GM18951 (cell line): ENCODE measurements at regions of chr12 and their contacts with region 1.

Region 1: GRCh38 chr12:100234598-100235304 is 32.1 kb downstream of the DEPDC4 start:
- POLR2A ChIP-seq: no peak

Region 2: GRCh38 chr12:100573292-100574186 is 338.8 kb after region 1 on chr12 and contains the start of gene GAS2L3:
- in situ Hi-C with region 1: loop called (anchors 25 kb)
- POLR2A ChIP-seq: peak; percentile 57

Region 3: DNA sequence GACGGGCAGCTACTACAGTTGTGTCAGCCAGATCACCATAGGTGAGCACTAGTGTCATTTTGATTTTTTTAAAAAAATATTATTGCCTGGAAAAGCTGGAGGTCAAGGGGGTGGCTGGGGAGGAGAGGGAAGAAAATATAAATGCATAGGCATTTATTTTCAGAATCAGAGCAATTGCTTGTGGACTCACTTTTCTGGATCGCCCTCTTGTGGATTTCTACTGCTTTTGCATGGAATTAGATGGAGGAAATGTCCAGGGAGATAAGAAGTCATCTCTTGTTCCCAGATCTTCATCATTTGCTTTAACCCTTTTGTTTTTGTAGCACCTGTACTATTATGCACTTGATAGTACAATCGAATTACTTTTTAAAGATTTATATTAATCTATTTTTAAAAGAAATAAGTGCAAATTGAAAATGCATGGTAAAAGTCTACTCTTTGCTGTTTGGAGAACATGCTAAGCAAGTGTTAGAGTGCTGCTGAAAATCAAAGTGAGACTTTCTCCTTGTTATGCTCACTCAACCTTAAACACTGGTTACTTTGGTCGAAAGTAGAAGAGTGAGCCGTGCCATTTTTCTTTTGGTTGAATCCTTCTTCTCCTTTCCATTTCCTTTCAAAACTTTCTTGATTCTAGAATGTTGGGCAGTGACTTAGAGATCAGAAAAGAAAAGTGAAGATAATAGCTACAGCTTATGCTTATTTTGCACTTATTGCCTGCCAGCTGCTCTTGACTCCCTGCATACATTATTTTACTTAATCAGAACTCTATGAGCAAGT is 499.3 kb after region 1 on chr12:
- in situ Hi-C with region 1: loop called (anchors 25 kb)
- POLR2A ChIP-seq: no peak